MCF 10A (cell line): ENCODE measurements at regions of chr11 and their contacts with region 1.

Region 1: GRCh38 chr11:125625630-125626287 is 796 bp downstream of the CHEK1 start:
- DNase-seq: peak; percentile 92
- H3K4me3 Mint-ChIP-seq: peak overlapping the region; percentile 87
- H3K27ac Mint-ChIP-seq: peak overlapping the region; percentile 78
- H3K4me1 Mint-ChIP-seq: peaks cover 30% of the 10 kb centered on the region
- H3K27me3 Mint-ChIP-seq: no peaks in the 10 kb centered on the region
- CTCF ChIP-seq: no peak

Region 2: GRCh38 chr11:125281831-125282595 is 343.7 kb before region 1 on chr11:
- CTCF ChIA-PET with region 1: no interaction called
- POLR2A ChIA-PET with region 1: no interaction called
- intact Hi-C with region 1: no loop called
- DNase-seq: peak; percentile 16
- H3K4me3 Mint-ChIP-seq: no peak overlapping the region
- H3K27ac Mint-ChIP-seq: no peak overlapping the region
- H3K4me1 Mint-ChIP-seq: no peaks in the 10 kb centered on the region
- H3K27me3 Mint-ChIP-seq: no peaks in the 10 kb centered on the region
- CTCF ChIP-seq: no peak

Region 3: GRCh38 chr11:125568970-125569914 is 56.5 kb before region 1 on chr11 and contains the start of gene EI24:
- CTCF ChIA-PET with region 1: interaction called, 4 read pairs
- POLR2A ChIA-PET with region 1: interaction called, 17 read pairs
- intact Hi-C with region 1: no loop called
- DNase-seq: peak; percentile 92
- H3K4me3 Mint-ChIP-seq: peak within 1 kb of the TSS; percentile 85
- H3K27ac Mint-ChIP-seq: peak within 1 kb of the TSS; percentile 85
- H3K4me1 Mint-ChIP-seq: peaks cover 5% of the 10 kb centered on the region
- H3K27me3 Mint-ChIP-seq: no peaks in the 10 kb centered on the region
- CTCF ChIP-seq: peak; percentile 53
- total RNA-seq, gene EI24: 93.1 and 96.9 TPM in 2 replicates

Region 4: DNA sequence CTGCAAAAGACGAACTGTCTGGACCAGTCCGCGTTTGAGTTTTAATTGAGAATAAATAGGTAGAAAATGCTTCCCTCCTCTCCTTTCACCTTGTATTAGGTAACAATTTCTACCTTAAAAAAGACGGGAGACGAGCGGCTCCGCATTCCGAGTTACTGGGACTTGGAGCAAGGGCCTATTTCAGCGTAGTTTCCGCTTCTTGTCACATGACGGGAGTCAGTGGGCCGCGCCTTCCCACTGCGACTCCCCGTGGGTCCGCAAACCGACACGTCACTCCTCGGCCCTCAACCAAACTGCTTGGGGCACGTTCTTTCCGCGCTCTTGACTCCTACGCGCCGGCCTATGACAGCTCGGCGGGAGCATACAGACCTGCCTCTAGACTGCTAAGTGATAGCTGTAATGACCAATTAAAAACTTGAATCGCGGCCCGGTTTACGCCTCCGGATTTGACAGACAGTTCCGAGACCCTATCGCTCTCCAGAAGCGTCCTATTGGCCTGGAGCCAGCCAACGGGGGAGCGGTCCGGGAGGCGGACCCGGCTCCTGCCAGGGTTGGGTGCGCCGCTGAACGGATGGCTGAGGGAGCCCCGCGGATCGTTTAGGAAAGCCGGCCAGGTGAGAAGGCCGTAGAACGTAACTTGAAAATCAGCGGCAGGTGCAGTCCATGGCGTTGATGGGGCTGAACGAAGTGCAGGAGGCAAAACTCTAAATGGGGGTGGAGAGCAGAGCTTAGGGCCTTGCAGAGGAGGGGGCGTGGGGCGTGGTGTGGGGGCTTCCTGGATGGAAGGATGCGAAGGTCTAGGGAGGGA is 33.2 kb before region 1 on chr11 and contains the start of gene STT3A:
- CTCF ChIA-PET with region 1: interaction called, 4 read pairs
- POLR2A ChIA-PET with region 1: interaction called, 66 read pairs
- intact Hi-C with region 1: loop called (anchors 1 kb)
- DNase-seq: peak; percentile 100
- H3K4me3 Mint-ChIP-seq: peak within 1 kb of the TSS; percentile 93
- H3K27ac Mint-ChIP-seq: peak within 1 kb of the TSS; percentile 96
- H3K4me1 Mint-ChIP-seq: peaks cover 24% of the 10 kb centered on the region
- H3K27me3 Mint-ChIP-seq: no peaks in the 10 kb centered on the region
- CTCF ChIP-seq: no peak
- total RNA-seq, gene STT3A: 293 and 414 TPM in 2 replicates

Region 5: GRCh38 chr11:125637840-125638239 is 12.1 kb after region 1 on chr11:
- CTCF ChIA-PET with region 1: interaction called, 11 read pairs
- POLR2A ChIA-PET with region 1: interaction called, 6 read pairs
- intact Hi-C with region 1: no loop called
- DNase-seq: no peak
- H3K4me3 Mint-ChIP-seq: no peak overlapping the region
- H3K27ac Mint-ChIP-seq: peak overlapping the region; percentile 8
- H3K4me1 Mint-ChIP-seq: peaks cover 9% of the 10 kb centered on the region
- H3K27me3 Mint-ChIP-seq: no peaks in the 10 kb centered on the region
- CTCF ChIP-seq: no peak

Region 6: GRCh38 chr11:125874556-125875124 is 248.9 kb after region 1 on chr11:
- CTCF ChIA-PET with region 1: interaction called, 8 read pairs
- POLR2A ChIA-PET with region 1: interaction called, 6 read pairs
- intact Hi-C with region 1: loop called (anchors 1 kb)
- DNase-seq: peak; percentile 81
- H3K4me3 Mint-ChIP-seq: no peak overlapping the region
- H3K27ac Mint-ChIP-seq: no peak overlapping the region
- H3K4me1 Mint-ChIP-seq: no peaks in the 10 kb centered on the region
- H3K27me3 Mint-ChIP-seq: no peaks in the 10 kb centered on the region
- CTCF ChIP-seq: peak; percentile 86

Region 7: DNA sequence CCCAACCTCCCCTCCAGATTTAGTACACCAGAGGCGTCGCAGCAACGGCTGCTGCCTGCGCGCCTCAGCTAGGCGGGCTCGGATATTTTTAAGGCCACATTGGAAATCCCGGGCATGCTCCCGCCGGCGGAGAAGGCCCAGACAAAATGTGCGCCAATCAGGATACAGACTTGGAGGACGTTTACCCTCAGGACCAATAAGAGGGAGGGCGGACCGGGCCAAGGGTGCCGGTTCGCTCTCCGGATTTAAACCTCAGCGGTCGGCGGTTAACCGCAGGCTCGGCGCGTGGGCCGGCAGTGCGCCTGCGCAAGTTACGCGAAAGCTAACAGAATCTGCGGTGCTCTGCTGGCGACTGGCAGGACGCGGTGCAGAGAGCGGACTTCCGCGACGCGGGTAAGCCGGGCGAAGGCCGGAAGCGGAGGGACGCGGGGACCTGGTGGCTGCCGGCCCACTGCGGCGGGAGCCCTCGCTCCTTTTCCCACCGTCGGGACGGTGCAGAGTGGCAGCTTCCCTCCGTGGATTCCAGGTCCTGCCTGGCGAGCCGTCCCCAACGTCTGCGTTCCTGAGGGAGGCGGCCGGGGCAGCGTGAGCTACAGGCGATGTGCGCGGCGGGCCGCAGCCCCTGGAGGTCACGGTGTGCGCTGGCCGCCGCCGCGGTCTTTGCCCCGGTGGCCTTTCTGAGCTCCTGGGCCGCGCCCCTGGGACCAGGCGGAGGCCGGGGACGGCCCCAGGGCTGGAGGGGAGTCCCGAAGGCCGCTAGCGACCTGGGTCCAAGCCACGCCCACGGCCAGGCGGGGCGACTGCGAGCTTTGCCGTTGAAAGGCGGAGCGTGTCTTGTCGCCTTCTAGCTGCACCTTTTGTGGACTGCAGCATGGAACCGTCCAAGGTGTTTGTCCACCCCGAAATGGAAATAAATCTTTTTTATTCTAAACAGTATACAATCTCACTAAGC is 261.9 kb after region 1 on chr11 and contains the start of gene HYLS1:
- CTCF ChIA-PET with region 1: interaction called, 3 read pairs
- POLR2A ChIA-PET with region 1: interaction called, 20 read pairs
- intact Hi-C with region 1: no loop called
- DNase-seq: peak; percentile 96
- H3K4me3 Mint-ChIP-seq: peak within 1 kb of the TSS; percentile 83
- H3K27ac Mint-ChIP-seq: peak within 1 kb of the TSS; percentile 70
- H3K4me1 Mint-ChIP-seq: peaks cover 15% of the 10 kb centered on the region
- H3K27me3 Mint-ChIP-seq: no peaks in the 10 kb centered on the region
- CTCF ChIP-seq: no peak
- total RNA-seq, gene HYLS1: 7.9 and 10.2 TPM in 2 replicates

Region 8: DNA sequence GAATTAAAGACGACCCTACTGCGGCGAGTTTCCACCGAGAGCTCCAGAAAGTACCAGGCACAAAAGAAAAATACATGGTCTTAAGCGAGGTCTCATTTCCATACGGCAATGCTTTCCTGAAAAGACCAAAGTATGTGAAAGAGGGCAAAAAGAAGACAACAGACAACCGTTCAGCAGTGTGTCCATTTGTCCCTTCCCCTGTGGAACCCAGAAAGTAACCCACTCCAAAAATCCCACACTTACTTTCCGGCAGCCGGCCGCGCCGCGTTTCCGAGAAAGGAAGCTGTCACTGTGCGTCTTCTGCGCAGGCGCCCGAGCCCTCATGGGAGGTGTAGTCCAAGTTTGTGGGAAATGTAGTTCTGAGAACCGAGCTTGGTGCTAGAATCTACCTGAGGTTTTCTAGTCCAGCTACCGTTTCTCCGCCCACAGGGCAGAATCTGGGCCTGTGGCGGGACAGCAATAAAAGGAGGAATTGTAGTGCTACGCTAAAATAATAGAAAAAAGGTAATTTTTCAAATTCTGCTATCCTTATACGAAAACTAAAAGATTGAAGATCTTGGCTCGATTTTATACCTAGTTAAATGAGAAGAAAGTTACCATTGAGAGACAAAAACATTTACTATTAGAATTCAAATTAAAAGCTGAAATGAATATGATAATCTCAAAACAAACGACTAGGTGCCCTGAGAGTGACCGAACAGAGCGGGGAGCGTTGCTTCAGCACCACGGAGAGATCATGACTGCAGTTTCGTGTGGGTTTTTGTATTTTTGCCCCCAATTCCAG is 277.4 kb after region 1 on chr11 and contains the start of gene PUS3:
- CTCF ChIA-PET with region 1: interaction called, 4 read pairs
- POLR2A ChIA-PET with region 1: interaction called, 13 read pairs
- intact Hi-C with region 1: no loop called
- DNase-seq: peak; percentile 87
- H3K4me3 Mint-ChIP-seq: peak within 1 kb of the TSS; percentile 97
- H3K27ac Mint-ChIP-seq: peak within 1 kb of the TSS; percentile 90
- H3K4me1 Mint-ChIP-seq: peaks cover 10% of the 10 kb centered on the region
- H3K27me3 Mint-ChIP-seq: peaks cover 23% of the 10 kb centered on the region
- CTCF ChIP-seq: no peak
- total RNA-seq, gene PUS3: 12.7 and 16.5 TPM in 2 replicates